CD4-positive, alpha-beta memory T cell (primary cell): ENCODE measurements at regions of chr16 and their contacts with region 1.

Region 1: DNA sequence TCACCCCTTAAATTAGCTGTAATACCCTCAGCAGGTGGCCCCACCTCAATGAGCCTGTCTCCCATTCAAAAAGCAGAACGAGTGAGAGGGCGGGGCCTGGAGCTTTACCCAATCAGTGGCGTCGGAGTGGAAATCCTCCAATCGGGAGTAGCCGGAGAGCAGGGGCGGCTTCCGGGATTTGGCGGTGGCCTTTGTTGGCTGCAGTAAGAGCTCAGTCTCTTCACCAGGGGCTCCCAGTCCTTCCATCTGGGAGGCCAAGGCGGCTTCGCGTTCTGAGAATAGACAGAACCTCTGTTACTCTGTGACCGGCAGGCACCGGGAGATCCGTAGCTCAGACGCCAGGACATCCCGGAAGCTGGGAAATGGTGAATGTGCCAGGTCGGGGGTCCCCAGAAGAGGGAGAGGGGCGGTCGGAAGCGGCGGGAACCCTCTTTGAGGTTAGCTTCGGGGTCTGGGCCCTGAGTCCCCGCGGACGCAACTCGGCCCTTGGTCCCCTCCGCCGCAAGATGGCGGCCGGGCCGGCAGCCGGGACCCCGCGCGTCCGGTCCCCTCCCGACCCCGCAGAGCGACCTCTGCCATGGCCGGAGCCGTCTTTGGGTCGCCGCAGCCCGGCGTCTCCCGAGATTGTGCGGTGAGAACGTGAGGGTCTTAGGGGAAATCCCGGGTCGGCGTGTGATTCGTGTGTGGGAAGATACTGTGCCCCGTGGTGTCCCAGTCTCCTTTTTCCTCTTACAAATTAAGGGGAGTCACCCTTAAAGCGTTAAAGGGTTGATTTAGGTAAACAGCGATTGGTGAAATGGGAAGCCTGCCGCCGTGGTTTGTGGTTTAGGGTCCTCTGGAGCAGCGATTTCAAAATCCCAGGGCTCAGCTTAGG is 160.3 kb upstream of the ZNF267 start:
- DNase-seq: peak; percentile 87 to 94 (median 88)
- H3K4me3 ChIP-seq: peak overlapping the region; percentile 64 to 87
- H3K4me3 Mint-ChIP-seq: peak overlapping the region; percentile 99 to 100 (median 100)
- H3K27ac ChIP-seq: peak overlapping the region; percentile 91
- H3K27ac Mint-ChIP-seq: peak overlapping the region; percentile 95 to 99 (median 99)
- H3K4me1 ChIP-seq: peaks cover 33% of the 10 kb centered on the region
- H3K4me1 Mint-ChIP-seq: peaks cover 30 to 62% (median 54%) of the 10 kb centered on the region in 4 donors
- H3K27me3 ChIP-seq: no peaks in the 10 kb centered on the region
- H3K27me3 Mint-ChIP-seq: no peaks in the 10 kb centered on the region

Region 2: DNA sequence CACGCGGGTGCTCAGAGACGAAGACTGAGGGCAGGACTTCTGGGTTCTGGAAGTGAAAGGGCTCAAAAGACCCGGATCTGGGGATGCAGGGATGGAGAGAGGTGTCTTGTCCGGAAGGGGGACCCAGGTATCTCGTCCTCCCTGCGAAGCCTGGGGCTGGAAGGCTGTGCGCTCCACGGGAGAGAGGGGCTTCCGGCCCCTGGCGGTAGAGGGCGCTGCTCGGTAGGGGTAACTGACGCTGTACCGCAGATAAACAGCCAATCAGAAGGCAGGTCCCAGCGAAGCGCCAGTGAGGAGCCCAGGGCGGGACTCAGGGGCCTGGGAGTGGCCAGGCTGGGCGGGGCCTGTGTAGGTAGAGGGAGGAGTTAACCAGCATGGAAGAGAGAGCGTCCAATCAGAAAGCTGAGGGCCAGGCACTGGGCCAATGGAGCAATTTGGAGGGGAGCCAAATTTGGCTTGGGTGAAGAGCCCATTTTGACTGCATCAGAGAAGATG is 240.6 kb before region 1 on chr16:
- CTCF ChIA-PET with region 1: no interaction called
- POLR2A ChIA-PET with region 1: interaction called, 10 read pairs
- intact Hi-C with region 1: no loop called
- DNase-seq: peak in 3 of 5 donors; percentile 21 to 27 (median 25)
- H3K4me3 ChIP-seq: peak overlapping the region in 1 of 2 donors; percentile 27
- H3K4me3 Mint-ChIP-seq: peak overlapping the region; percentile 56 to 90 (median 76)
- H3K27ac ChIP-seq: no peak overlapping the region
- H3K27ac Mint-ChIP-seq: peak overlapping the region in 1 of 7 donors; percentile 42
- H3K4me1 ChIP-seq: peaks cover 34% of the 10 kb centered on the region
- H3K4me1 Mint-ChIP-seq: peaks cover 10 to 32% (median 27%) of the 10 kb centered on the region in 4 donors
- H3K27me3 ChIP-seq: no peaks in the 10 kb centered on the region
- H3K27me3 Mint-ChIP-seq: peaks cover 0 to 13% of the 10 kb centered on the region in 2 donors

Region 3: DNA sequence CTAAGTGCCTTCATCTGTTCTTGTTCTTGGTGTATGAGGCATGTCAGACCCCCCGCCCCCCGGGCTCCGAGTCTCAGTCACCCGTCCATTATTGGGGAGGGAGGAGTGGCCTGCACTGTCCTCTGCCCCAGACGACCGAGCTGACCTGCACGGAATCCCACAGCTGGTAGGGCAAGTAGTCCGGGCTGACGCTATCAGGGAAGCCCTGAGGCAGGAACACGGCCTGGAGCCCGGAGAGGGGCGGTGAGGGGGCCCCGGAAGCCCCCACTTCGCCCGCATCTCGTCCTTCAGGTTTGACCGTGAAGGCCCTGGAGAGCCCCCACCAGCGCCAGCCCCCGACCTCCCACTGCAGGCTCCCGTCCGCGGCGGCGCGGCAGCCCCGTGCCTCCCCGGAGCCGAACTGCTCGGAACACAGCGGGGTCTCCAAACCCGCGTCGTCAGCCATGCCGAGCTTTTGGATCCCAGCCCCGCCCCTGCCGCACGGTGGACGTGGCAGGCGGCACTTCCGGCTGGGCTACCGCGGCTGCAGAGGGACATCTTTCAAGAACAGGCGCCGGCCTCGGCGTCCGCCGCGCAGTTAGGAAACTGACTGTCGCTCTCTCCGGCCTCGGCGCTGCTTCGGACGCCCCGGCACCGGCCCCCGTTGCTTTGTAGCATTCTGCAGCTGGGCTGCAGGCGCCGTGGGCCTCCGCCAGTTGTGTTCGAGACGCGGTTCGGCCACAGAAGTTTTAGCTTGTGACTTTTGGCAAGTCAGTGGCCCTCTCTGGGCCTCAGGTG is 205.2 kb before region 1 on chr16 and contains the start of gene RUSF1:
- CTCF ChIA-PET with region 1: no interaction called
- POLR2A ChIA-PET with region 1: interaction called, 17 read pairs
- intact Hi-C with region 1: loop called (anchors 5 kb)
- DNase-seq: peak; percentile 74 to 82 (median 77)
- H3K4me3 ChIP-seq: peak within 1 kb of the TSS; percentile 92 to 94
- H3K4me3 Mint-ChIP-seq: peak within 1 kb of the TSS; percentile 87 to 97 (median 93)
- H3K27ac ChIP-seq: peak within 1 kb of the TSS; percentile 83
- H3K27ac Mint-ChIP-seq: peak within 1 kb of the TSS; percentile 91 to 98 (median 97)
- H3K4me1 ChIP-seq: peaks cover 36% of the 10 kb centered on the region
- H3K4me1 Mint-ChIP-seq: peaks cover 22 to 59% (median 45%) of the 10 kb centered on the region in 4 donors
- H3K27me3 ChIP-seq: no peaks in the 10 kb centered on the region
- H3K27me3 Mint-ChIP-seq: no peaks in the 10 kb centered on the region
- total RNA-seq, gene RUSF1: 101 to 110 TPM

Region 4: DNA sequence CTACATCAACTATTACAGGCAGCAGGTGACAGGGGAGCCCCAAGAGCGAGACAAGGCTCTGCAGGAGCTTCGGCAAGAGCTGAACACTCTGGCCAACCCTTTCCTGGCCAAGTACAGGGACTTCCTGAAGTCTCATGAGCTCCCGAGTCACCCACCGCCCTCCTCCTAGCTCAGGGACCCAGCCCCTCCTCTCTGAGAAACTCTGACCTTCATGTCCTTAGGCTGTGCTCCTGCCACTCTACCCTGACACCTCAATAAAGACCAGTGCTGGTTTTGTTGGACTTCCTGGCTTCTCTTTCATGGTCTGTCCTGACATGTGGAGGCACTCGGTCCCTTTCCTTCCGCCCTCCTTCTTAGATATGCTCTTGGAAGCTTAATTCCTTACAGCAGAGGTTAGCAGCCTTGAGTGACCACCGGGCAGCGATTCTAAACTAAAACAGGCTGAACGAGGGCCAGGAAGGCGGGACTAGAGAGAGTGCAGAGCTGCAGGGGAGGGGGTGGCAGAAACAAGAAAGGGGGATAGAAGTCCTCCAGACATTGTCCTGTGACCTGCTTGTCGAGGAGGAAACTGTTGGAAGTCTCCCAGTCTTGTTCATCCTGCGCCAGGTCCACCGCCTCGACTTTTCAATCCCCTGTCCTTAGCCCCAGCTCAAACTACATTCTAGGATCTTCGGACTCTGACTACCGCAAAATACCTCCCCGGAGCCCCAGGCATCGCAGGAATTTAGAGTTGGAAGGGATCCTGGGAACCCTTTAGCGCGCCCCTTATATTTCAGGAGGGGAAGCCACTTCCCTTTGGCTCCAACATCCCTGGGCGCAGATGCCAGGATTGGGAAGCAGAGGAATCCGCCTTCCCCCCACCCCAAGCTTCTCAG is 184.5 kb before region 1 on chr16:
- CTCF ChIA-PET with region 1: no interaction called
- POLR2A ChIA-PET with region 1: no interaction called
- intact Hi-C with region 1: no loop called
- DNase-seq: no peak
- H3K4me3 ChIP-seq: no peak overlapping the region
- H3K4me3 Mint-ChIP-seq: peak overlapping the region in 6 of 8 donors; percentile 10 to 40 (median 18)
- H3K27ac ChIP-seq: no peak overlapping the region
- H3K27ac Mint-ChIP-seq: no peak overlapping the region
- H3K4me1 ChIP-seq: no peaks in the 10 kb centered on the region
- H3K4me1 Mint-ChIP-seq: peaks cover 0 to 12% (median 5%) of the 10 kb centered on the region in 4 donors
- H3K27me3 ChIP-seq: peaks cover 11% of the 10 kb centered on the region
- H3K27me3 Mint-ChIP-seq: peaks cover 15 to 18% of the 10 kb centered on the region in 2 donors

Region 5: DNA sequence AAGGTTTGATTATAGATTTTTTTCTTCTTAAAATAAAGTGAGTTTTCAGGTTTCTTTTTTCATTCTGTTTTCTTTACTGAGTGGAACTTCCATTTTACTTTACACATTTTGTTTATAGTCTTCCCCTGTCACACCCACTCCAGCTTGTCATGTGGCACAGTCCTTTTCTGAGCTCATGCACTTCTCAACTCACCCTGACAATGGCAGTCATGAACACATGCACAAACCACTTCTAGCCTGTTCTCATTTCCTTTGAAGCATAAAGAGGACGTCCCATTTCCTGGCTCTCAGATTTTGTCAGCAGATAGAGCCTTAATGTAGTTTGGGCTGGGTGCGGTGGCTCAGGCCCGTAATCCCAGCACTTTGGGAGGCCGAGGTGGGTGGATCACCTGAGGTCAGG is 17.6 kb before region 1 on chr16:
- CTCF ChIA-PET with region 1: interaction called, 15 read pairs
- POLR2A ChIA-PET with region 1: interaction called, 68 read pairs
- intact Hi-C with region 1: loop called (anchors 1 kb)
- DNase-seq: peak; percentile 80 to 90 (median 85)
- H3K4me3 ChIP-seq: no peak overlapping the region
- H3K4me3 Mint-ChIP-seq: no peak overlapping the region
- H3K27ac ChIP-seq: no peak overlapping the region
- H3K27ac Mint-ChIP-seq: no peak overlapping the region
- H3K4me1 ChIP-seq: peaks cover 28% of the 10 kb centered on the region
- H3K4me1 Mint-ChIP-seq: peaks cover 7 to 10% (median 8%) of the 10 kb centered on the region in 4 donors
- H3K27me3 ChIP-seq: no peaks in the 10 kb centered on the region
- H3K27me3 Mint-ChIP-seq: no peaks in the 10 kb centered on the region

Region 6: DNA sequence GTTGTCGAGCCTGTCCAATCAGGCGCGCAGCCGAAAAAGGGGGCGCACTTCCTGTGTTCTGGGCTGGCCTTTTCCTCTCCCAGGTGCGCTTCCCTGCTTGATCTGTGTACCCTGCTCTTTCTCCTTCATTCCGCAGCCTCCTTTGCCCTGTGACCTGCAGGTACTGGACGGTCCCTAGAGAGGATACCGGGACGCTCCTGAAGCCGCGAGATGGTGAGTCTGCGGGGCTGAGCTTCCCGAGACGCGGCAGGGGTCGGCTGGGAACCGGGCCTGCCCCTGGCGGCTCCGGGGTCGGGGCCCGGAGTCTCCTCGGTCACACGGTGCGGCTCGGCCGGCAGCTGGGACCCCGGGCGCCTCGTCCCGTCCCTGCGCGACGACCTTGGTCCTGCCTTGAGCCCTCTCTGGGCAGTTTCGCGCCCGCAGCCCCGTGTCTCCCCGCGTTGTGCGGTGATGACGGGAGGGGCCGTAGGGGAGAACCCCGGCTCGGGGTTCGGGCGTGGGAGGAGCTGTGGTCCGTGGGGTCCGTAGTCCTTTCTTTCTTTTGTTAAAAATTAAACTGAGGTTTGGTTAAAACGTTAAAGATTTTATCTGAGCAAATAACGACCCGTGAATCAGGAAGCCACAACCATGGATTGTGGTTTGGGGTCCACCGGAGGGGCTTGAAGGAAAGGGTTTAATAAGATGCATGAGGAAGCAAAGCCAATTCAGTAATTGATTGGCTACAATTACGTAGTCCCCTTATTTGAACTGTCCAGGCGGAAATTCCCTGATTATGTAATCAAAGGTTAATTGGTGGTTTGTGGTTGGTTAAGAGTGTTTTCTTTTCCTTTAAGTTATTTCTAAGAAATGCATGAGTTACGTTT is 12.6 kb before region 1 on chr16:
- CTCF ChIA-PET with region 1: interaction called, 15 read pairs
- POLR2A ChIA-PET with region 1: interaction called, 68 read pairs
- intact Hi-C with region 1: loop called (anchors 1 kb)
- DNase-seq: peak; percentile 74 to 86 (median 81)
- H3K4me3 ChIP-seq: peak overlapping the region; percentile 61 to 70
- H3K4me3 Mint-ChIP-seq: peak overlapping the region; percentile 88 to 98 (median 92)
- H3K27ac ChIP-seq: peak overlapping the region; percentile 94
- H3K27ac Mint-ChIP-seq: peak overlapping the region; percentile 94 to 99 (median 96)
- H3K4me1 ChIP-seq: peaks cover 28% of the 10 kb centered on the region
- H3K4me1 Mint-ChIP-seq: peaks cover 25 to 33% (median 30%) of the 10 kb centered on the region in 4 donors
- H3K27me3 ChIP-seq: no peaks in the 10 kb centered on the region
- H3K27me3 Mint-ChIP-seq: no peaks in the 10 kb centered on the region

Region 7: GRCh38 chr16:31873556-31874365 is 160.5 kb after region 1 on chr16 and contains the start of gene ZNF267:
- CTCF ChIA-PET with region 1: interaction called, 13 read pairs
- POLR2A ChIA-PET with region 1: interaction called, 14 read pairs
- intact Hi-C with region 1: loop called (anchors 2 kb)
- DNase-seq: peak; percentile 93 to 96 (median 94)
- H3K4me3 ChIP-seq: peak within 1 kb of the TSS; percentile 79 to 82
- H3K4me3 Mint-ChIP-seq: peak within 1 kb of the TSS; percentile 94 to 98 (median 96)
- H3K27ac ChIP-seq: peak within 1 kb of the TSS; percentile 97
- H3K27ac Mint-ChIP-seq: peak within 1 kb of the TSS; percentile 87 to 99 (median 98)
- H3K4me1 ChIP-seq: peaks cover 85% of the 10 kb centered on the region
- H3K4me1 Mint-ChIP-seq: peaks cover 60 to 89% (median 70%) of the 10 kb centered on the region in 4 donors
- H3K27me3 ChIP-seq: no peaks in the 10 kb centered on the region
- H3K27me3 Mint-ChIP-seq: no peaks in the 10 kb centered on the region
- total RNA-seq, gene ZNF267: 47.4 to 51.9 TPM